Dendritic cell treated with granulocyte-macrophage colony-stimulating factor and Interleukin-4, amounts not matched to agents 40 ng/mL and 50 ng/mL, for 4 days (primary cell): ENCODE measurements at regions of chr4 and their contacts with region 1.

Region 1: DNA sequence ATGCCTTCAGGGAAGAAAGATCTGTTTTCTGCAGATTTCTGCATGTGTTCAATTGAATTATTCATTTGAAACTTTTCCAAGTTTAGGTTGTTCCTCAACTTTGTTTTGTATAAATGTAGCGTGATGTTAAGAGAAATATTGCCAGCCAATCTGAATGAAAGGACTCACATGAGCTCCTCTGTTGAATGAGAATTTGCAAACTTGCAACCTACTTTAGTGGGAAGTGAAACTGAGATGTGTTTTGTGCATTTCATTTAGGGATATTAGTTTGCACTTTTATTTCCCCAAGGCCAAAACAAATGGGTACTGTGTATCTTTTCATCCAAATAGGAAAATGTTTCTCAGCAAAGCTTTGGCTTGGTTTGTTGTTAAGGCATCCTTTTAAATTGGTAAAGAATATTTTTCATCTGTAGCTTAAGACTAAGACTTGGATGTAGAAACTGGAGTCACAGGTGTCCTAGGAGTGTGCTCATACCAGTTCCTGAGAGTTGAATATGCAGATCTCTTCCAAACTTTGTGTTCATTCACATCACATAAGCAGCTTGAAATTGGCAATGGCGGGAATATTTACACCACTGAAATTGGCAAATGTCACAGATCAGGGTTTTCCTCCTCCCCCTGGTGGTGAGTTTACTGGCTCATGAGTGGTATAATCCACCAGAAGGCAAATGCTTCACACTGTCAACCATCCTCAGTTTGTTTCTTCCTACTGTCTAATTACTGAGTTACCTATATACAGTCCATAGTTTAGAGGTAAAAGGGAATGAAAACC is 193.6 kb upstream of the BANK1 start:
- H3K4me3 Mint-ChIP-seq: no peak overlapping the region
- H3K27ac Mint-ChIP-seq: peak overlapping the region; percentile 74
- H3K4me1 Mint-ChIP-seq: peaks cover 13% of the 10 kb centered on the region
- H3K27me3 Mint-ChIP-seq: no peaks in the 10 kb centered on the region

Region 2: DNA sequence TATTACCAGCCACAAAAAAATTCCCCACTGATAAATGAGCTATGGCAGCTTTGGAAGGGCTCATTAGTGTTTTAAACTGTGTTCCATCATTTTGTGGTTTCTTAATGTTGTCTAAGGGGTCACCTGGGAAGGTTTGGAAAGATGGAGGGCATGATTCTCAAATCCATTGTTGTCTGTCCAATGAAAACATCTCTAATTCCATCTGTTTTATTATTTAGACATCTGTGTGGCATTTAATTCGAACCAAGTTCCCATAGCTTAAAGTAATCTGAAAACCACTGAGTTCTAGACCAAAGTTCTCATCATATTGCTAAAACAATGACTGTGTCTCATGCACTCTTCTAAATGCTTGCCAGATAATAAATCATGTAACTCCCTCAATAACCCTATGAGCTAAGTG is 145.9 kb before region 1 on chr4:
- intact Hi-C with region 1: no loop called
- H3K4me3 Mint-ChIP-seq: no peak overlapping the region
- H3K27ac Mint-ChIP-seq: no peak overlapping the region
- H3K4me1 Mint-ChIP-seq: no peaks in the 10 kb centered on the region
- H3K27me3 Mint-ChIP-seq: no peaks in the 10 kb centered on the region

Region 3: GRCh38 chr4:101643186-101643837 is 46.3 kb after region 1 on chr4:
- intact Hi-C with region 1: loop called (anchors 5 kb)
- H3K4me3 Mint-ChIP-seq: no peak overlapping the region
- H3K27ac Mint-ChIP-seq: no peak overlapping the region
- H3K4me1 Mint-ChIP-seq: no peaks in the 10 kb centered on the region
- H3K27me3 Mint-ChIP-seq: no peaks in the 10 kb centered on the region

Region 4: DNA sequence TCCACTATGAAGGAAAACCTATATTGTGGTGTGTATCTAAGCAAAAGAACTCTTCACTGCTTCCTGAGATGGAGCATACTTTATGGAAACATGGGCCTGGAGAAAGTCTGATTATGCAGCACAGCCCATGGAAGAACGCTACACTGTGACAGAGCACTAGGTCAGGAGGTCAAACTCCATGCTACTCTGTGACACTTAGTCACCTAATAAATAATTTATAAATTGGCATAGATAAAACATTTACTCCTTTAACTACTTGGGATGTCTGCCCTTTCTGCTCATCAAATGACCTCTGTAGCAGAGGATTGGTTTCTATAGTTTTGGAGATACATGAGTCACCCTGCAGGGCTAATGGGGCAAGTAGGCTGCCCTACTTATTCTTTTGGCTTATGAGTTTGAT is 58.9 kb after region 1 on chr4:
- intact Hi-C with region 1: no loop called
- H3K4me3 Mint-ChIP-seq: no peak overlapping the region
- H3K27ac Mint-ChIP-seq: no peak overlapping the region
- H3K4me1 Mint-ChIP-seq: no peaks in the 10 kb centered on the region
- H3K27me3 Mint-ChIP-seq: peaks cover 2% of the 10 kb centered on the region

Region 5: GRCh38 chr4:101678153-101678552 is 81.2 kb after region 1 on chr4:
- intact Hi-C with region 1: no loop called
- H3K4me3 Mint-ChIP-seq: no peak overlapping the region
- H3K27ac Mint-ChIP-seq: no peak overlapping the region
- H3K4me1 Mint-ChIP-seq: no peaks in the 10 kb centered on the region
- H3K27me3 Mint-ChIP-seq: no peaks in the 10 kb centered on the region